PC-9 (cell line): ENCODE measurements at regions of chr15 and their contacts with region 1.

Region 1: GRCh38 chr15:69609176-69609575 is 156.6 kb downstream of the RPLP1 start:
- DNase-seq: peak; percentile 9 to 71
- H3K4me3 ChIP-seq: no peak overlapping the region
- H3K27ac ChIP-seq: no peak overlapping the region
- H3K4me1 ChIP-seq: peaks cover 14% of the 10 kb centered on the region; the same call in 1 of the 2 replicates
- H3K27me3 ChIP-seq: no peaks in the 10 kb centered on the region
- CTCF ChIP-seq: no peak

Region 2: GRCh38 chr15:69154684-69155083 is 454.5 kb before region 1 on chr15:
- CTCF ChIA-PET with region 1: no interaction called
- POLR2A ChIA-PET with region 1: no interaction called
- intact Hi-C with region 1: no loop called
- DNase-seq: peak; percentile 18 to 69
- H3K4me3 ChIP-seq: no peak overlapping the region
- H3K27ac ChIP-seq: no peak overlapping the region
- H3K4me1 ChIP-seq: peaks cover 18% of the 10 kb centered on the region
- H3K27me3 ChIP-seq: no peaks in the 10 kb centered on the region
- CTCF ChIP-seq: no peak

Region 3: DNA sequence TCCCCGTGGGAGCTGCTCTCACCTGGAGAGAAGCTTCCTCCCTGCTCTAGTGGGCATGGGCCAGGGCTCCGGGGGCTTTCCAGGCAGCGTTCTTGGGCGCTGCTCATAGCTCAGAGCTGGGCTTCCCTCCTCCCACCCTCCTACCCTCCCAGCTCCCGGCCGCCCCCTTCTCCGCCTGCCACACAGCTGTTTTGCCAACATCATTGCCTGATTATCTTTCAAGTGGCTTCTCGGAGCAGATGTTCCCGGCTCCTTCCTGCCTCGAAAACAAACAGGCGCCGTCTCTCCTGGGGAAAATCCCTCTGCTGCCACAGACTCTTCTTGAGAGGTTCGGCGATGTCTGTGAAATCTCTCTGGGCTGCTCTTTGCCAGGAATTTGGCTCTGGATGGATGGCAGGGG is 39.0 kb after region 1 on chr15:
- CTCF ChIA-PET with region 1: no interaction called
- POLR2A ChIA-PET with region 1: no interaction called
- intact Hi-C with region 1: no loop called
- DNase-seq: no peak
- H3K4me3 ChIP-seq: no peak overlapping the region
- H3K27ac ChIP-seq: no peak overlapping the region
- H3K4me1 ChIP-seq: peaks cover 20% of the 10 kb centered on the region
- H3K27me3 ChIP-seq: no peaks in the 10 kb centered on the region
- CTCF ChIP-seq: no peak

Region 4: GRCh38 chr15:70033529-70034140 is 424.5 kb after region 1 on chr15:
- CTCF ChIA-PET with region 1: no interaction called
- POLR2A ChIA-PET with region 1: interaction called, 23 read pairs
- intact Hi-C with region 1: no loop called
- DNase-seq: no peak
- H3K4me3 ChIP-seq: no peak overlapping the region
- H3K27ac ChIP-seq: no peak overlapping the region
- H3K4me1 ChIP-seq: peaks cover 24% of the 10 kb centered on the region
- H3K27me3 ChIP-seq: no peaks in the 10 kb centered on the region
- CTCF ChIP-seq: no peak